ENCODE measurements at regions of chr4 and their contacts with region 1.

Region 1: GRCh38 chr4:81260443-81261101 is 45.5 kb upstream of the PRKG2 start:
- ATAC-seq: peak in 1 of 8 experiments; percentile 26
- H3K4me3 ChIP-seq: no peak overlapping the region
- H3K27ac ChIP-seq: no peak overlapping the region
- H3K4me1 ChIP-seq: no peaks in the 10 kb centered on the region

Region 2: DNA sequence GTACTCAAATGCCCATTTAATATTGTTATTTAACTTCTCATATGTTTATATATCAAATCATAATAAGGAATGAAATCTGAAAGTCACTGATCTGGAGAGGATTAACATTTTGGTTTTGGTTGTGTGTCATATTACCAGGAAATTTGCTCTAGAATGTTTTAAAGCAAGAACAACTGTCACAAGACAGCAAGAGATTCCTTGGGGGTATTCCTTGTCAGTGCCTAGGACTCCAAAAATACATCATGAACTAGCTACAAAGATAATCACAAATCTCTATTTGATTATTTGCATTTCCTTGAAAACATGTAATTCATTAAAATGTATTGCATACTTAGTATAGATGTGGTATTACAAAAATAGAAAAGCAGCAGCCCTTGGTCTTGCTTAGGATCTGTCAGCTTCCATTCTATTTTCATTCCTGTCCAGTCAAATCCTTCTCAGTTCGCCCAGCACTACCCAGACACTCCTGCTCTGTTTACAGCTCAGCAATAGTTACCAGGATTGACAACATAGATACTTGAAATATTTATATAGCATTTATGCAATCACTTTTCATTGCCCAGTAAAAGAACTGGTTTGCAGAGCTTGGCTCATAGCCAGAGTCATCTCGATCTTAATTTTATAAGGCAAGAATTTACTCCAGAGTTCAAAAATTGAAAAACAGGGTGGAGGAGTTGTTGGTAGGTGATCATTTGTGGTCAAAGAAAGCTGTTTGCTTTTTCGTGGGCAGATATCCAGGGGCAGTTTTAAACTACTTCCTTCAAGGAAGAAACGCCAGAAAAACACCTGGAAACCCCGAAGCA is 239.2 kb before region 1 on chr4:
- in situ Hi-C with region 1: no loop called
- ATAC-seq: peak in 3 of 8 experiments; percentile 80 to 93 (median 86)
- H3K4me3 ChIP-seq: no peak overlapping the region
- H3K27ac ChIP-seq: no peak overlapping the region
- H3K4me1 ChIP-seq: no peaks in the 10 kb centered on the region

Region 3: GRCh38 chr4:81084029-81084428 is 176.5 kb before region 1 on chr4:
- in situ Hi-C with region 1: loop called in 1 of 9 experiments (anchors 10 kb)
- ATAC-seq: peak in 4 of 8 experiments; percentile 51 to 89 (median 69)
- H3K4me3 ChIP-seq: no peak overlapping the region
- H3K27ac ChIP-seq: no peak overlapping the region
- H3K4me1 ChIP-seq: no peaks in the 10 kb centered on the region